ENCODE measurements at regions of chr15 and their contacts with region 1.

Region 1: DNA sequence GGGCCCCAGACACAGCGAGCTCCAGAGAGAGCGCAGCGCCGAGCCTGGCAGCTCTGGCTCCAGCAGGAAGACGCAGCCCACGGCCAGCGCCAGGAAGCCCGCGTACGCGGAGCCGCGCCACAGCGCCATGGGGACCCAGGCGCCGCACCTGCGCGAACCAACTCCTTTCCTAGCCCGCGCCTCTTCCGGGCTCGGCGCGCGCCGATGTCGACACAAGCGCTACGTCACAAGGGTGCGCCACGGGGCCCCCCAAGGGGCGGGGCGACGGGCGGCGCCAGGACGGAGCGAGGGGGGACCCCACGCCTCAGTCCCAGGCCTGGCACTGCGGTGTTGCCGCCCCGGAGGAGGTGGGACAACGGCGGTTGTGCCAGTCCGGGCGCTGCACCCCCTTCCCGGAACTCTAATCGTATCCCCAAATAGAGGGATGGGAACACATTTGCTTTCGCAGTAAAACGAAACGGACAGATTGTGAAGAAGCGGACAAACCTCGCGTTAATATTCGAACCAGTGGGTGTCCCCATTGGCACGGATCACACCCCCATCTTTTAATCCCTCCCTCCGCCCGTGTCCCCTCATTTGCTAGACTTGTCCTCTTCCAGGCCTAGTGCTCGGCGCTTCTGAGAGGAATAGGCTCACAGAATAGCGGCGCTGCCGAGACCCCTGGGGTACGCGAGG is at the start of gene ADPGK:
- H3K4me3 Mint-ChIP-seq: peak within 1 kb of the TSS; percentile 89
- H3K27ac Mint-ChIP-seq: peak within 1 kb of the TSS; percentile 96
- H3K4me1 Mint-ChIP-seq: peaks cover 64% of the 10 kb centered on the region
- H3K27me3 Mint-ChIP-seq: no peaks in the 10 kb centered on the region

Region 2: DNA sequence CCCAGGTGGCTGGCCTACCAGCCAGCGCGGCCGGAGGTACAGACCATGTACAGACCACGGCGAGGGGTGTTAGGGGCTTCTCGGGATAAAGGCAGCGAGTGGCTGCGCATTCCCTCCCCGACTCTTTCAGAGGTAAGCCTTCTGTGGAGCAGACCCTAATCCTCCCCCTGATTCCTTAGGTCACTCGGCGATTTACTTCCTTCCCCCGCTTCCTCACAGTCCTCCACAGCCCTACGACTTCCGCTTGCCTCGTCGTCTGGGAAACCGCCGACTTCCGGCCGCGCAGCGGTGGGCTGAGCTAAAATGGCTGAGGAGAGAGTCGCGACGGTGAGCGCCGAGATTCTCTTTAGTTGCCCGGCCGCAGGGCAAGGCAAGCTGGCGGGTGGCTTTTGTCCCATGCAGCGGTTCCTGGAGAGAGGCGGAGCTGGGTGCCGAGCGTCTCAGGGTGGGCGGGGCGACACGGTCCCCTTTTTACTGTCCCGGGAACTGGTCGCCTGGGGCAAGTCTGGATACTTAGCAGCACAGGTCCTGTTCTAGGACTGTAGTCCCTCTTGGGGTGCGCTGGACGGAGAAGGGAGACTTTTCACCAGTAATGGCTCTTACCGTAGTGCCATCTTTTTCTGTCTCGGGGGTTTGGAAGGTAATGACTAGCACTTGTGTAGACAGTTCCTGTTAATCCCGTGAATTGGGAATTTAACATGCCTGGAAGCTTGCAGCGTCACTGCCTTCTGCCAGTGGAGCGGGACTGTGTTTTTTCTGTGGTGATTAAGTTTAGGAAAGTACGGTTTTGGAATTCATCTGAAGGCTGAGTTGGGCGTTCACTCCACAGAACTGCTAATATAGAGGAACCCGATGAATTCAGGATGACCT is 97.5 kb before region 1 on chr15 and contains the starts of genes BBS4 and HIGD2B:
- intact Hi-C with region 1: no loop called
- H3K4me3 Mint-ChIP-seq: peak within 1 kb of the TSS; percentile 86
- H3K27ac Mint-ChIP-seq: peak within 1 kb of the TSS; percentile 96
- H3K4me1 Mint-ChIP-seq: peaks cover 7% of the 10 kb centered on the region
- H3K27me3 Mint-ChIP-seq: no peaks in the 10 kb centered on the region

Region 3: GRCh38 chr15:73069109-73069508 is 285.4 kb after region 1 on chr15:
- intact Hi-C with region 1: no loop called
- H3K4me3 Mint-ChIP-seq: no peak overlapping the region
- H3K27ac Mint-ChIP-seq: no peak overlapping the region
- H3K4me1 Mint-ChIP-seq: no peaks in the 10 kb centered on the region
- H3K27me3 Mint-ChIP-seq: peaks cover 33% of the 10 kb centered on the region

Region 4: GRCh38 chr15:73683777-73684580 is 900.3 kb after region 1 on chr15 and contains the start of gene CD276:
- intact Hi-C with region 1: loop called (anchors 10 kb)
- H3K4me3 Mint-ChIP-seq: peak within 1 kb of the TSS; percentile 94
- H3K27ac Mint-ChIP-seq: peak within 1 kb of the TSS; percentile 87
- H3K4me1 Mint-ChIP-seq: peaks cover 42% of the 10 kb centered on the region
- H3K27me3 Mint-ChIP-seq: peaks cover 60% of the 10 kb centered on the region